ENCODE measurements at regions of chr21 and their contacts with region 1.

Region 1: GRCh38 chr21:38712071-38712470 is 93.7 kb upstream of the ETS2 start:
- DNase-seq: peak in 1 of 2 donors; percentile 19
- ATAC-seq: peak in 3 of 8 donors; percentile 44 to 70 (median 63)
- H3K4me3 ChIP-seq: no peak overlapping the region
- H3K27ac ChIP-seq: no peak overlapping the region
- H3K4me1 ChIP-seq: no peaks in the 10 kb centered on the region
- H3K27me3 ChIP-seq: peaks cover 0 to 6% (median 0%) of the 10 kb centered on the region in 7 donors
- CTCF ChIP-seq: peak in 7 of 9 donors; percentile 42 to 67 (median 55)

Region 2: DNA sequence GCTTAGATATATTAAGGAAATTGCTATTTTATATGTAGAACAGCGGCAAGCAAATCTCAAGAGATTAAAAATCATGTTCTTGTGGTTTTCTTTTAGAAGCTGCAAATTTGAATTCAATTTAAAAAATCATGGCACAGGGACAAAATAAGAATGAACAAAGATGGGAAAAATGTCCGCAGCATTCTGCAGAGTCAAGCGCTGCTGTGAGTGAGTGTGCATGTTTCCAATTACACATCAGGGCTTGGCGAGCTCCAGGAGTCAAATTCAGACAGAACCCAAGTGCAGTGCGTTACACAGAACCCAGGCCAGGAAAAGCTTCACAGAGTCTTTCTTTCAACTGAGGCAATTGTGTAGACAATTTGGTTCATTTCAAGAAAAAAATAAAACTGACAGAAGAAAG is 180.5 kb before region 1 on chr21:
- intact Hi-C with region 1: loop called in 1 of 10 experiments (anchors 10 kb)
- DNase-seq: peak in 1 of 2 donors; percentile 9
- ATAC-seq: peak in 2 of 8 donors; percentile 67
- H3K4me3 ChIP-seq: no peak overlapping the region
- H3K27ac ChIP-seq: no peak overlapping the region
- H3K4me1 ChIP-seq: no peaks in the 10 kb centered on the region
- H3K27me3 ChIP-seq: peaks cover 0 to 4% (median 0%) of the 10 kb centered on the region in 7 donors
- CTCF ChIP-seq: no peak